ENCODE measurements at regions of chr1 and their contacts with region 1.

Region 1: DNA sequence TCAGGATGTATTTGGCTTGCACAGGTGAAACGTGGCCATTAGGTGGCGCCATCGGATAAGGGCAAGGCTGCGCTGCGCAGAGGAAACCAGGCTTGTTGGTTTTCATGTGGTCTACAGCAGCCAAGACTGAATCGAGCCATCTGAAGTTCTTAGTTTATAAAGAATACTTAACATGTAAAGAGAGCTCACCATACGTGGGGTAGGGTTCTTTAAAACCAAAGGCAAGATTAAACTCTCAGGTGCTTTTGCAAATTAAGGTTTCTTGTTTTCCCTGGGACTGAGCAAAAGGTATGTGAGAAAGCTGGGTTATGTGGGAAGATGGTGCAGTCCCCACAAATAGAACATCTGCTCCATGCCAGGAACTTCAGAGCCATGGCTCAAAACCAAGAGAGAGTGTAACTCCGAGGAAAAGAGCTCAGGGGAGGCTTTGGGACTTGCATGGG is 9.3 kb downstream of the MASP2 start:
- DNase-seq: peak; percentile 89 to 91 (median 91)
- ATAC-seq: peak; percentile 92
- H3K4me3 ChIP-seq: no peak overlapping the region
- H3K27ac ChIP-seq: no peak overlapping the region
- H3K4me1 ChIP-seq: no peaks in the 10 kb centered on the region
- H3K27me3 ChIP-seq: no peaks in the 10 kb centered on the region
- CTCF ChIP-seq: peak; percentile 82 to 98 (median 97)
- POLR2A ChIP-seq: no peak

Region 2: DNA sequence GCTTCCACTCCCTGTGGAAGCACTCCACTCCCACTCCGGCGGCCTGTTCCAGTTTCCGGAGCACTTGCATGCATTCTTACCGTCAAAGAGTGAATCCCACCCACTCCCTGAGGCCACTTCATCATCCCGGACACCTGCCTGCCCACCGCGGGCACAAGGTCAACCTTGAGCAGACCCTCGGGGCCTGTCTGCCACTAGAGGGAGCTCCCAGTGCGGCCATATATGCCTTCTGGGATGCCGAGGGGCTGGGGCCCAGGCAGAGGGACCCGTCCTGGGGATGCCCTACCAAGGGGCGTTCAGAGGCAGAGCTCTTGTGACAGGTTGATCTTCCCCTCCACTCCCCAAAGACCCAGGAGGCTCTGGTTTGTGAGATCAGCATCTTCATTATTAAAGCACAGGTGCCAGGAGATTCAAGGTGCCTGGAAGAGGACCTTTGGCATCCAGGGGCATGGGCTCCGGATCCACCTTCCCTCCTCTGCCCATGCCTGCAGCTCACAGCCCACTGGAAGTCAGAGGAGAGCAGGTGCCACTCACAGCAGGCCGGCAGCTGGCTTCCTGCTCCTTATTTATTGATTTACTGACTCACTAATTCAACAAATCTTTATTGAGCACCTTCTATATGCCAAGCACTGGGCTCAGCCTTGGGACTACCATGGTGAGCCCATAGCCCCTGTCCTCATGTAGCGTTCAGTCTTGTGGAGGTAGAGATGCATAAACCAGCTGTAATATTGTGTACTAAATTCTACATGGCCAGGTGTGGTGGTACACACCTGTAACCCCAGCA is 282.6 kb after region 1 on chr1:
- intact Hi-C with region 1: no loop called
- DNase-seq: peak in 2 of 4 donors; percentile 18 to 34
- ATAC-seq: no peak
- H3K4me3 ChIP-seq: no peak overlapping the region
- H3K27ac ChIP-seq: no peak overlapping the region
- H3K4me1 ChIP-seq: peaks cover 5% of the 10 kb centered on the region
- H3K27me3 ChIP-seq: no peaks in the 10 kb centered on the region
- CTCF ChIP-seq: peak in 6 of 7 experiments; percentile 12 to 34 (median 23)
- POLR2A ChIP-seq: no peak

Region 3: GRCh38 chr1:11629184-11630016 is 591.6 kb after region 1 on chr1:
- intact Hi-C with region 1: loop called (anchors 10 kb)
- DNase-seq: no peak
- ATAC-seq: no peak
- H3K4me3 ChIP-seq: no peak overlapping the region
- H3K27ac ChIP-seq: no peak overlapping the region
- H3K4me1 ChIP-seq: no peaks in the 10 kb centered on the region
- H3K27me3 ChIP-seq: no peaks in the 10 kb centered on the region
- CTCF ChIP-seq: no peak
- POLR2A ChIP-seq: no peak

Measured in body of pancreas (tissue), 4 donors.